Activated CD4-positive, alpha-beta memory T cell treated with anti-CD3 and anti-CD28 coated beads for 36 hours (primary cell): ENCODE measurements at regions of chr4 and their contacts with region 1.

Region 1: GRCh38 chr4:7101692-7102515 is 34.0 kb upstream of the GRPEL1 start:
- DNase-seq: peak; percentile 77
- H3K4me3 Mint-ChIP-seq: peak overlapping the region; percentile 86
- H3K27ac Mint-ChIP-seq: no peak overlapping the region
- H3K4me1 Mint-ChIP-seq: peaks cover 11% of the 10 kb centered on the region
- H3K27me3 Mint-ChIP-seq: peaks cover under 1% of the 10 kb centered on the region

Region 2: DNA sequence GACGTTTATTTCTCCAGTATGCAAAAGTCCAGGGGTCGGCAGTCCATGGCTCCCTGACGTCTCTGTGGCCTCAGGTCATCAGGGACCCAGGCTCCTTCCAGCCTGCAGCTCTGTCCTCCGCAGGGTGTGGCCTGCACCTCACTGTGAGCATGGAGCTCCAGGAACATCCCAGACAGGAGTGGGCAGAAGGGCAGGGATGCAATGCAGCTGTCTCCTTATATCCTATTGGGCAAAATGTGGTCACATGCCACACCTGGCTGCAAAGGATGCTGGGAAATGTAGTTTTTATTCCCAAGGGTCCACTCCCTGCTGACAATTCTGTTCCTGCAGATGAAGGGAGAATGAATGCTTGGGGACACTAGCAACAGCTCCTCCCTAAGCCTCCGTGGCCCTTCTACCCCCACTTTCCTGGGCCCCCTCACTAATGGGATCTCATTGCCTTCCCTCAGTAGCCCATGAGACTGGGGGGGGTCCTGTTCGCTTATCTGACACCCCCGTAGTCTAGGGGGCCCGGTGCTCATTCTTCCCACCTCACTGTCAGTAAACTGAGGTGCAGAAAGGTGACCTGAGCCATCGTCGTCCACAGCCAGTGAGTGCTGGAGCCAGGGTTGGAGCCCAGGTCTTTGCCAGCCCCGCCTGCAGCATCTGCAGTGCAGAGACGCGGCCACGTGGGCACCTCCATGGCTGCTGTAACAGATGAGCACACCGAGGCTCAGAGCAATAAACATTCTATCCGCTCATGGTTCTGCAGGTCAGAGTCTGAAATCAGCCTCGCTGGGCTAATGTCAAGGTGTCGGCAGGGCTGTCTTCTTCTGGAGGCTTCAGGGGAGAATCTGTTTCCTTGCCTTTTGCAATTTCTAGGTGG is 28.1 kb before region 1 on chr4:
- CTCF ChIA-PET with region 1: interaction called, 20 read pairs
- POLR2A ChIA-PET with region 1: no interaction called
- intact Hi-C with region 1: loop called (anchors 1 kb)
- DNase-seq: peak; percentile 38
- H3K4me3 Mint-ChIP-seq: no peak overlapping the region
- H3K27ac Mint-ChIP-seq: no peak overlapping the region
- H3K4me1 Mint-ChIP-seq: peaks cover 11% of the 10 kb centered on the region
- H3K27me3 Mint-ChIP-seq: peaks cover 2% of the 10 kb centered on the region

Region 3: GRCh38 chr4:7081891-7082471 is 19.9 kb before region 1 on chr4:
- CTCF ChIA-PET with region 1: interaction called, 15 read pairs
- POLR2A ChIA-PET with region 1: no interaction called
- intact Hi-C with region 1: no loop called
- DNase-seq: peak; percentile 66
- H3K4me3 Mint-ChIP-seq: no peak overlapping the region
- H3K27ac Mint-ChIP-seq: no peak overlapping the region
- H3K4me1 Mint-ChIP-seq: no peaks in the 10 kb centered on the region
- H3K27me3 Mint-ChIP-seq: peaks cover 25% of the 10 kb centered on the region

Region 4: GRCh38 chr4:7186061-7186461 is 84.2 kb after region 1 on chr4:
- CTCF ChIA-PET with region 1: interaction called, 4 read pairs
- POLR2A ChIA-PET with region 1: no interaction called
- intact Hi-C with region 1: loop called (anchors 10 kb)
- DNase-seq: peak; percentile 46
- H3K4me3 Mint-ChIP-seq: no peak overlapping the region
- H3K27ac Mint-ChIP-seq: no peak overlapping the region
- H3K4me1 Mint-ChIP-seq: peaks cover 12% of the 10 kb centered on the region
- H3K27me3 Mint-ChIP-seq: peaks cover 29% of the 10 kb centered on the region

Region 5: GRCh38 chr4:7196736-7197135 is 94.8 kb after region 1 on chr4:
- CTCF ChIA-PET with region 1: no interaction called
- POLR2A ChIA-PET with region 1: no interaction called
- intact Hi-C with region 1: no loop called
- DNase-seq: no peak
- H3K4me3 Mint-ChIP-seq: no peak overlapping the region
- H3K27ac Mint-ChIP-seq: no peak overlapping the region
- H3K4me1 Mint-ChIP-seq: peaks cover 2% of the 10 kb centered on the region
- H3K27me3 Mint-ChIP-seq: peaks cover 50% of the 10 kb centered on the region

Region 6: GRCh38 chr4:7487502-7487901 is 385.6 kb after region 1 on chr4:
- CTCF ChIA-PET with region 1: no interaction called
- POLR2A ChIA-PET with region 1: no interaction called
- intact Hi-C with region 1: no loop called
- DNase-seq: no peak
- H3K4me3 Mint-ChIP-seq: no peak overlapping the region
- H3K27ac Mint-ChIP-seq: no peak overlapping the region
- H3K4me1 Mint-ChIP-seq: no peaks in the 10 kb centered on the region
- H3K27me3 Mint-ChIP-seq: peaks cover 13% of the 10 kb centered on the region

Region 7: GRCh38 chr4:7761720-7762119 is 659.8 kb after region 1 on chr4:
- CTCF ChIA-PET with region 1: no interaction called
- POLR2A ChIA-PET with region 1: no interaction called
- intact Hi-C with region 1: no loop called
- DNase-seq: peak; percentile 66
- H3K4me3 Mint-ChIP-seq: no peak overlapping the region
- H3K27ac Mint-ChIP-seq: peak overlapping the region; percentile 69
- H3K4me1 Mint-ChIP-seq: peaks cover 30% of the 10 kb centered on the region
- H3K27me3 Mint-ChIP-seq: no peaks in the 10 kb centered on the region